Activated naive CD4-positive, alpha-beta T cell treated with anti-CD3 and anti-CD28 coated beads for 36 hours (primary cell): ENCODE measurements at regions of chr2 and their contacts with region 1.

Region 1: GRCh38 chr2:148644883-148645538 is 460 bp downstream of the EPC2 start:
- DNase-seq: peak; percentile 94
- H3K4me3 Mint-ChIP-seq: peak overlapping the region; percentile 90
- H3K27ac Mint-ChIP-seq: peak overlapping the region; percentile 97
- H3K4me1 Mint-ChIP-seq: peaks cover 43% of the 10 kb centered on the region
- H3K27me3 Mint-ChIP-seq: no peaks in the 10 kb centered on the region

Region 2: GRCh38 chr2:147297820-147298219 is 1347.2 kb before region 1 on chr2:
- CTCF ChIA-PET with region 1: no interaction called
- intact Hi-C with region 1: loop called (anchors 10 kb)
- DNase-seq: peak; percentile 45
- H3K4me3 Mint-ChIP-seq: no peak overlapping the region
- H3K27ac Mint-ChIP-seq: peak overlapping the region; percentile 86
- H3K4me1 Mint-ChIP-seq: peaks cover 58% of the 10 kb centered on the region
- H3K27me3 Mint-ChIP-seq: no peaks in the 10 kb centered on the region

Region 3: DNA sequence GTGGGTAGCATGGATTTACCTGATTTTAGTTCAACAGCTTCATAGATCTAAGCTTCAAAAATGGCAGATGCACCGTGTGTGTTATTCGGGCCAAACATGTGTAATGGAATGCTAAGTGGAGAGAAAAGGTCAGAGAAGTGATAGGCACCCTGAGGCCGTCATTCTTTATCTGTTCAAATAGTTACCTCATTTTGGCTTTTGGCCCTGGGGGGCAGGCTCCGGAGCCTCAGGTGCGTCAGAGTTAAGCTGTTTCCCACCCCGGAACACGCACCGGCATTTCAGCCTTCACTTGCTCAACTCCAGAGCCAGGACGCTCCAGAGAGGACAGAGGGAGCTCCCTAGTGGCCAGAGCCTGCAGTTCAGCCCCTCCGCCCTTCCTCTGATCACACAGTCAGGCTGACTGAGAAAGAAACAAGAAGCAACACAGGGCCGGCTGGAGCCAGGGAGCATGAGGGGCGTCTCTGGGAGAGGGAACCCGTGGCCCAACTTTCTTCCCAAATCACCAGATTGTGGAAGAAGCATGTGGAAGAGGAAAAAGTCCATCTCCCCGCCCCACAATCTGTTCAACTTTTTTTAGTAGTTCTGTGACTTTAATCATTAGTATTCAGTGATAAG is 135.6 kb before region 1 on chr2:
- CTCF ChIA-PET with region 1: interaction called, 6 read pairs
- intact Hi-C with region 1: loop called (anchors 1 kb)
- DNase-seq: peak; percentile 97
- H3K4me3 Mint-ChIP-seq: peak overlapping the region; percentile 60
- H3K27ac Mint-ChIP-seq: peak overlapping the region; percentile 70
- H3K4me1 Mint-ChIP-seq: peaks cover 29% of the 10 kb centered on the region
- H3K27me3 Mint-ChIP-seq: no peaks in the 10 kb centered on the region

Region 4: DNA sequence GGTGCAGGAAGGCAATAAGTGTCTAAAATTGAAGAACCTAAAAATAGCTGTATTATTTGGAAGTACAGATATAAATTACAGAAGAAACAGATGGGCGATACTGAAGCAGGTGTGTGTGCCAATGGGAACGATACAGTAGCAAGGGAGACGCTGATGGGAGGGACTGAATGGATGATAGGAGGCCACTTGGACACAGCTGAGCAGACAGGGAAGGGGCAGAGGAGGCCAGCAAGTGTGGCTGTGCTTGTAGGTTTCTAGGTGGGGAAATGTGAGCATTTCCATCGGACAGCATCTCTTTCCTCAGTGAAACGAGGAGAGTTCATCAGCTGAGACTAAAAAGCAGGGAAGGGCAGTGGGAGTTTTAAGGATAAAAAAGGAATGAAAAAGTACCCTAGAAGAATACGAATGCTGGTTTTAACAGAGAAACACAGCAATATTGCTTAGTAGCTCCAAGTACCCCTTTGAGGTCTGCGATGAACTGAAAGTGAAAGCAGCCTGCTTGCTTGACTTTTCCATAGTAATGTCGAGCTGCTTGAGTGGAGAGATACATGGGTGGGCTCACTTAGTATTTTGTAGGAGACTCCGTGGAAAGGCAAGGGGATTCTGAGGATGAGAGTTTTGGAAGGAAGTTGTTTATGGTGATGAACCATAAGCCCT is 92.2 kb before region 1 on chr2:
- CTCF ChIA-PET with region 1: no interaction called
- intact Hi-C with region 1: loop called (anchors 1 kb)
- DNase-seq: peak; percentile 57
- H3K4me3 Mint-ChIP-seq: no peak overlapping the region
- H3K27ac Mint-ChIP-seq: no peak overlapping the region
- H3K4me1 Mint-ChIP-seq: no peaks in the 10 kb centered on the region
- H3K27me3 Mint-ChIP-seq: no peaks in the 10 kb centered on the region

Region 5: DNA sequence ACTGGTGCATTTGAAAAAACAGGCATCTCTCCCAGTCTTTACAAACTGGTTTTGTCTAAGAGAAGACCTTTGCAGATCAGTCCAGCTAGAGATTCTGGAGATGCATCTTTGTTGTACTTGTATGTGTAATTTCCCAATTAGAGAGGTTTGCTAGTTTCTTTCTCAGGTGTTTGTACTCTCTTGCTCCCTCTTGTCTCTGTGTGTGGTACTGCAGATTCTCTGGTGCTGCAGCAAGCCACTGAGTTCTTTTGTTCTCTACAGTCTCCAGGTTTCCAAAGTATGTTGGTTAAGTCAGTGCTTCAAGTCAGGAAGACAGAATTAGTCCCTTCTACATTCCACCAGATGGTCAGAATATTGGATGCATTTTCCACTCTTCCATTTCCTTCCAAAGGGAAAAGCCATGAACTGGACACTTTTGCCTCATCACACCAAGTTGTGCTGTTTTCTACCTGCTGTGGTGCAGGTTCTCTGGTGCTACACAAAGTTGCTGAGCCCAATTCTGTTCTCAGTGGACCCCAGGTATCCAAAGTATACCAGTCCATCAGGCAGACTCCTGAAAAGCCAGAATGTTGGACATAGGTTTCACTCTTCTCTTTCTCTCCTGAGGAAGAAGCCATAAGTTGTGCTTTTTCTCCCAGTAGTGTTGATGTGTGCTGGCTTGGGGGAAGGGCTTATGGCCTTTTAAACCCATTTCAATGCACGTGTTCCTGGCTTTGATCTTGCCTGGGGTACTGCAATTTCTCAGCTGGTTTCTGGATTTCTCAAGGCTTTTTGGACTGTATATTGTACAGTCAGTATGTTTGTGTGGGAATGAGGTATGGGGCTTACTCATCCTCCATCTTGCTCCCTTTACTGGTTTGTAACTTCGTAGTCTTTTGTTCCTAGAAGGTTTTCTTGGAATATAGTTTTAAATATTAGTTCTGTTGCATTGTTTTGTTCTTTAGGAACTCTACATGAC is 29.3 kb after region 1 on chr2:
- CTCF ChIA-PET with region 1: no interaction called
- intact Hi-C with region 1: loop called (anchors 1 kb)
- DNase-seq: peak; percentile 58
- H3K4me3 Mint-ChIP-seq: no peak overlapping the region
- H3K27ac Mint-ChIP-seq: no peak overlapping the region
- H3K4me1 Mint-ChIP-seq: peaks cover 68% of the 10 kb centered on the region
- H3K27me3 Mint-ChIP-seq: no peaks in the 10 kb centered on the region

Region 6: DNA sequence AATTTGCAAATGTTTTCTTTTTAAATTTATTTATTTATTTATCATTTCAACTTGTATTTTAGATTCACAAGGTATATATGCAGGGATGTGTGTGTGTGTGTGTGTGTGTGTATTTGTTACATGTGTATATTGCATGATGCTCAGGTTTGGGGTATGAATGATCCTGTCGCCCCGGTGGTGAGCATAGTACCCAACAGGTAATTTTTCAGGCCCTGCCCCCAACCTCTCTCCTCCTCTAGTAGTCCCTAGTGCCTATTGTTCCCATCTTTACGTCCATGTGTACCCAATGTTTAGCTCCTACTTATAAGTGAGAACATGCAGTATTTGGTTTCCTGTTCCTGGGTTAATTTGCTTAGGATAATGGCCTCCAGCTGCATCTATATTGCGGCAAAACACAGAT is 197.0 kb after region 1 on chr2:
- CTCF ChIA-PET with region 1: no interaction called
- intact Hi-C with region 1: no loop called
- DNase-seq: no peak
- H3K4me3 Mint-ChIP-seq: no peak overlapping the region
- H3K27ac Mint-ChIP-seq: no peak overlapping the region
- H3K4me1 Mint-ChIP-seq: no peaks in the 10 kb centered on the region
- H3K27me3 Mint-ChIP-seq: peaks cover 6% of the 10 kb centered on the region

Region 7: GRCh38 chr2:148874868-148875341 is 229.9 kb after region 1 on chr2 and contains the start of gene KIF5C:
- CTCF ChIA-PET with region 1: interaction called, 3 read pairs
- intact Hi-C with region 1: loop called (anchors 1 kb)
- DNase-seq: peak; percentile 94
- H3K4me3 Mint-ChIP-seq: peak within 1 kb of the TSS; percentile 88
- H3K27ac Mint-ChIP-seq: peak within 1 kb of the TSS; percentile 53
- H3K4me1 Mint-ChIP-seq: peaks cover 13% of the 10 kb centered on the region
- H3K27me3 Mint-ChIP-seq: peaks cover 19% of the 10 kb centered on the region
- total RNA-seq, gene KIF5C: 18.6 to 24.5 TPM

Region 8: DNA sequence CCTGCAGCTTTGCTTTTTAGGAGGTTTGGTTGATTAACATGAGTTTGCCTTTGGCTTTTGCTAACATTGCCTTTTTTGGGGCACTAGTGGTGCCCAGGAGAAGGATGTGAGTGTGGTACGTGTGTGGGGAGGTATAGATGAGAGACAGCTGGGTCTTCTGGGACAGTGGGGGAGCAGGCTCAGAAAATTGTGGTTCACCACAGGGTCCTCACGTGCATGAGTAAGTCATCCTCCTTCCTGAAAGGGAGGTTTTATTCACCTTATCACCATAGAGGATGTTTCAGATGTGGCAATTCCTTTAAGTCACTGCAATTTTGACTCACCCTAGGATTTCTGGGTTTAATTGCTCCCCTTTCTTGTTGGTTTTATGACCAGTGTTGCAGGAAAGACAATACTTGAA is 522.4 kb after region 1 on chr2:
- CTCF ChIA-PET with region 1: no interaction called
- intact Hi-C with region 1: loop called (anchors 5 kb)
- DNase-seq: peak; percentile 77
- H3K4me3 Mint-ChIP-seq: no peak overlapping the region
- H3K27ac Mint-ChIP-seq: no peak overlapping the region
- H3K4me1 Mint-ChIP-seq: peaks cover 22% of the 10 kb centered on the region
- H3K27me3 Mint-ChIP-seq: peaks cover 31% of the 10 kb centered on the region